A549 (cell line): ENCODE measurements at regions of chr10 and their contacts with region 1.

Region 1: GRCh38 chr10:97117372-97117771 is 68.4 kb downstream of the SLIT1 start:
- DNase-seq: peak; percentile 24 to 42
- ATAC-seq: peak; percentile 55 to 83; a peak in 5 of 6 replicates
- H3K4me3 ChIP-seq: no peak overlapping the region
- H3K27ac ChIP-seq: no peak overlapping the region
- H3K4me1 ChIP-seq: no peaks in the 10 kb centered on the region
- CTCF ChIP-seq: peak; percentile 71
- EP300 ChIP-seq: no peak
- POLR2A ChIP-seq: no peak
- RAD21 ChIP-seq: peak; percentile 66 to 69

Region 2: GRCh38 chr10:97081621-97082235 is 35.6 kb before region 1 on chr10:
- CTCF ChIA-PET with region 1: interaction called, 13 read pairs
- POLR2A ChIA-PET with region 1: no interaction called
- DNase-seq: peak; percentile 66 to 71
- ATAC-seq: peak; percentile 72 to 90; a peak in 5 of 6 replicates
- H3K4me3 ChIP-seq: no peak overlapping the region
- H3K27ac ChIP-seq: no peak overlapping the region
- H3K4me1 ChIP-seq: no peaks in the 10 kb centered on the region
- CTCF ChIP-seq: peak; percentile 68
- EP300 ChIP-seq: no peak
- POLR2A ChIP-seq: no peak
- RAD21 ChIP-seq: peak; percentile 30 to 49; a peak in 4 of 5 replicates

Region 3: GRCh38 chr10:97089209-97089870 is 28.0 kb before region 1 on chr10:
- CTCF ChIA-PET with region 1: interaction called, 13 read pairs
- POLR2A ChIA-PET with region 1: no interaction called
- DNase-seq: no peak
- ATAC-seq: peak; percentile 6 to 19; a peak in 2 of 6 replicates
- H3K4me3 ChIP-seq: no peak overlapping the region
- H3K27ac ChIP-seq: no peak overlapping the region
- H3K4me1 ChIP-seq: no peaks in the 10 kb centered on the region
- CTCF ChIP-seq: no peak
- EP300 ChIP-seq: no peak
- POLR2A ChIP-seq: no peak
- RAD21 ChIP-seq: no peak

Region 4: DNA sequence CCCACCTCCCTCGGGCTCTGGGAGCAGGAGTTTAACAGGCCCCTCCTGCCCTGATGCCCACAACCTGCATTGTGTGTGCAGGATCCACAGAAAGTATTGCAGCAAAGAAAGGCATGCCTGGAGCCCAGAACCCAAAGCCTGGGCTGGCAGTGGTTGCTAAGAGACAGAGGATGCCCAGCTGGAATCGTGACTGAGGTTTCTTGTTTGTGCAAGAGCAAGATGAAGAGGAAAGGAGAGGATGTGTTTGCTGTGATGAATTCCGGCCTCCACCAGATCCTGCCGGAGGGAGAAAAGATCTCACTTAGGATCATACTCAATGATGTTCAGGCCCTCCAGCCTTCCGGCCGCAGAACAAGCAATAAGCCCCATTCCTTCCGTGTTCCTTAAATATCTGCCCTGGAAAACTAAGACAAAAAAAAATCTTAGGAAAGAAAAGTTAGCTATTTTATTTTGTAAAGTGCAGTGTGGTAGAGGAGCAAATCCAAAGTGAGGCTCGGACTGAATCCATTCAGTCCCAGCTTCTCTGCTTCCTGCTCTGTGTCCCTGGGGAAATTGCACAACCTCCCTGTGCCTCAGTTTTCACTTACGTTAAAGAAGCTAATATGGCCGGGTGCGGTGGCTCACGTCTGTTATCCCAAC is 11.3 kb after region 1 on chr10:
- CTCF ChIA-PET with region 1: interaction called, 11 read pairs
- POLR2A ChIA-PET with region 1: no interaction called
- DNase-seq: no peak
- ATAC-seq: no peak
- H3K4me3 ChIP-seq: no peak overlapping the region
- H3K27ac ChIP-seq: no peak overlapping the region
- H3K4me1 ChIP-seq: no peaks in the 10 kb centered on the region
- CTCF ChIP-seq: no peak
- EP300 ChIP-seq: no peak
- POLR2A ChIP-seq: no peak
- RAD21 ChIP-seq: no peak

Region 5: GRCh38 chr10:97355571-97355975 is 238.2 kb after region 1 on chr10:
- CTCF ChIA-PET with region 1: no interaction called
- POLR2A ChIA-PET with region 1: no interaction called
- DNase-seq: no peak
- ATAC-seq: peak in 1 of 2 experiments; percentile 30; a peak in 2 of 6 replicates
- H3K4me3 ChIP-seq: no peak overlapping the region
- H3K27ac ChIP-seq: no peak overlapping the region
- H3K4me1 ChIP-seq: no peaks in the 10 kb centered on the region
- CTCF ChIP-seq: peak; percentile 30
- EP300 ChIP-seq: no peak
- POLR2A ChIP-seq: no peak
- RAD21 ChIP-seq: peak; percentile 46 to 56; a peak in 4 of 5 replicates